Left lung (tissue), 14 donors: ENCODE measurements at regions of chr12 and their contacts with region 1.

Region 1: GRCh38 chr12:66269757-66270383 is 32.4 kb upstream of the HELB start:
- DNase-seq: peak in 1 of 4 donors; percentile 24
- ATAC-seq: peak; percentile 87
- H3K4me3 ChIP-seq: no peak overlapping the region
- H3K27ac ChIP-seq: peak overlapping the region in 1 of 2 donors; percentile 83
- H3K4me1 ChIP-seq: peaks cover 0 to 28% of the 10 kb centered on the region in 2 donors
- H3K27me3 ChIP-seq: no peaks in the 10 kb centered on the region
- CTCF ChIP-seq: peak; percentile 62 to 64

Region 2: DNA sequence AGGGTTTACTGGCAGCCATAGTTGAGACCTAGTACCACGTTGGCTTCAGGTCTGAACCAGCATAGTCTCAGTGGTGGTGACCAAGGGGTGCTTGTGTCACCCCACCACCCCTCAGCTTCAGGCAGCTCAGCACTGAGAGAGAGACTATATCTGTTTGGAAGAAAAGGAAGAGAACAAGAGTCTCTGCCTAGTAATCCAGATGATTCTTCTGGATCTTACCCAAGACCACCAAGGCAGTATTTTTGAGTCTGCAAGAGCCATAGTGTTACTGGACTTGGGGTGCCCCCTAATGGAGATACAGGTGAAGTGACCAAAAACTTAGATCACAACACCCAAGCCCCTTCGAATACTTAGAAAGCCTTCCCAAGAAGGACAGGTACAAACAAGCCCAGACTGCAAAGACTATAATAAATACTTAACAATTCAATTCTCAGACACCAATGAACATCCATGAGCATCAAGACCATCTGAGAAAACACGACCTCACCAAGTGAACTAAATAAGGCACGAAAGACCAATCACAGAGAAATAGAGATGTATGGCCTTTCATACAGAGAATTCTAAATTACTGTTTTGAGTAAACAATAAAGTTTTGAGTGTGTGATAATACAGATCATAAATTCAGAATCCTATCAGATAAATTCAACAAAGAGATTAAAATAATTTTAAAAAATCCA is 139.5 kb after region 1 on chr12:
- intact Hi-C with region 1: loop called in 1 of 2 experiments (anchors 10 kb)
- DNase-seq: peak in 2 of 4 donors; percentile 56 to 80
- ATAC-seq: peak; percentile 67
- H3K4me3 ChIP-seq: no peak overlapping the region
- H3K27ac ChIP-seq: no peak overlapping the region
- H3K4me1 ChIP-seq: peaks cover 0 to 13% of the 10 kb centered on the region in 2 donors
- H3K27me3 ChIP-seq: no peaks in the 10 kb centered on the region
- CTCF ChIP-seq: peak; percentile 48 to 57

Region 3: DNA sequence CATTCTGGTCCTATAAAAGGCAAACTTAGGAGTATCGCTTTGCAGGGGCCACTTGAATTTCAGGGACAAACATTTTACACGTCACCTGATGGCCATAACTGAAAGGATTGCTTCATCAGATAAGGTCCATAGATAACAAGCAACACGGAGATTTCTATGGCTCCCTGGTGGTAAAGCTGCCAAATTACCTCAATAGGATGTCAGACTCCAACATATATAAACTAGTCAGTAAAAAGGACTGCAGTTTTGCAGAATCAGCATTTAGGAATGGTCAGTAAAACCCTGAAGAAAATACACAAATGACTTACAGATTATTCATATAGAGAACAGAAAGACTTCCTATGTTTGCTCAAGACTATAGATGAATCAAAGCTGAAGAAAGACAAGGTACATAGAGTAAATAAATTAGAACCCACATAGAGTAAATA is 475.1 kb after region 1 on chr12:
- intact Hi-C with region 1: no loop called
- DNase-seq: no peak
- ATAC-seq: no peak
- H3K4me3 ChIP-seq: no peak overlapping the region
- H3K27ac ChIP-seq: no peak overlapping the region
- H3K4me1 ChIP-seq: no peaks in the 10 kb centered on the region
- H3K27me3 ChIP-seq: no peaks in the 10 kb centered on the region
- CTCF ChIP-seq: no peak